Panc1 (cell line): ENCODE measurements at regions of chr5 and their contacts with region 1.

Region 1: DNA sequence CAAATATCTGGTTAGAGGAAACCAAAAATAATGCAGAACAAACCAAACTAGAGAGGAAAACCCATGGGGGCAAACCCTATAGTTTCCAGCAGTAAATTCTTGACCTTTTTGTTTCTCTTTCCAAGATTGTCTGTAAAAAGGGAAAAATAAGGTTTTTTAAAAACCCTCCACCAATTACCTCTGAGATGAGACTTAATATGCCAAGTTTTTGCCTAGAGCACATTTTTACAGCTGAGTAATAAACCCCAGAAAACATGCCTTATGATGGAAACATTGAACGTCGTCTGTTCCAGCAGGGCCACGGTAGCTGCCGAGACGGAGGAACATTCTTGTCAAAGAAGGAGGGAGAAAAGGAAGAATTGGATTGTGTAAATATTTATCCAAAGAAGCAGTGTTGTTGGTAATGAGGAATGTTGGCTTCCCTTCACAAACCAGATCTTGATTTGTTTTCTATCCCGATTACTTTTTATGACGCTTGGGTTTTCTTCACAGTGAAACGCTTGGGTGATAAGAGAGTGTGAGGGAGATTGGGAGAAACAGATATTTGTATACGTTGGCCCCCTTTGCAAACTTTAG is 17.3 kb upstream of the MSX2 start:
- DNase-seq: no peak
- ATAC-seq: no peak
- H3K4me3 ChIP-seq: no peak overlapping the region
- H3K27ac ChIP-seq: no peak overlapping the region
- H3K4me1 ChIP-seq: no peaks in the 10 kb centered on the region; the same call in 1 of the 2 replicates
- H3K27me3 ChIP-seq: no peaks in the 10 kb centered on the region
- CTCF ChIP-seq: no peak

Region 2: DNA sequence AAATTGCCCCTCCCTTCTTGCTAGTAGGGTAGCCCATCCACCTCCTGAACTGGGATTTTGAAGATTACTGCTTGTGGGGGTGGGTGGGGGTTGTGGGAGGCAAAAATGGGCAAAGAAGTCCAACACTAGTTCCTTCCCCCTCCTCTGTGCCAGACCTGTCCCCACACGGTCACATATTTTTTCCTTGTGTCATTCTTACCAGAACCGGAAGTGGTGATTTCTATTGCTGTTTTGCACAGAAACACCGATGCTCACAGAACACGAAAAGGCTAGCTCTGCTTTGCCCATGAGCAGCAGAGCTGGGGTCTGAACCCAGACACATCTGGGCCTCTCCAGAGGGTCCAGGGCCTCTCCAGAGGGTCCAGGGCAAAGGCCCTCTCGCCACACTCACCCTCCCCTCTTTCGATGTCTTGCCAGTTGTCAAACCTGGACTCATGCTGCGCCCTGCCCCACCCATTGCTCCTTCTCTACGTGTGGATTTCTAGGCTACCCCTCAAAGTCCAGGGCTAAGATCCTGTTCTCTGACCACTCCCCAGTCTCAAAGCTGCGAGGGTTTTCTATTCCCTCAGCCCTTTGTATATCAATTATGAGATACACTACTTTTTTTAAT is 247.1 kb before region 1 on chr5:
- CTCF ChIA-PET with region 1: no interaction called
- POLR2A ChIA-PET with region 1: interaction called, 12 read pairs
- in situ Hi-C with region 1: no loop called
- intact Hi-C with region 1: no loop called
- DNase-seq: no peak
- ATAC-seq: no peak
- H3K4me3 ChIP-seq: no peak overlapping the region
- H3K27ac ChIP-seq: no peak overlapping the region; the same call in 1 of the 2 replicates
- H3K4me1 ChIP-seq: no peaks in the 10 kb centered on the region
- H3K27me3 ChIP-seq: no peaks in the 10 kb centered on the region
- CTCF ChIP-seq: no peak

Region 3: DNA sequence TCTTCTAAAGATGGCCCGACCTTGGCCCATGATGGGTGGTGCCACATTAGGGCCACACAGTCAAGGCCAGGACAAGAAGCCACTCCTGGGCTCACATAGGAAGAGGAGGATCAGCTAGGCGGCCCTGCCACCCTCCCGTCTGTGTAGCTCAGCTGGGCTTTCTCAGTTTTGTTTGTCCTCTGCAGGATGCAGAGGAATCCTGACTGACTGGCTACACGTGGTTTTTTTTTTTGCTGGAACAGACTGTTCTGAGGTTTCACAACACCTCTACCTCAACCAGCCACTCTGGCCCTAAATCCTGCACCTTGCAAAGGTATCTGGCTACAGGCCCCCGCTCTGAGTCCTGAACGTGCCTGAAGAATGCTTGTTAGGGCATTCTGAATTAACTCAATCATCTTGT is 71.0 kb before region 1 on chr5:
- CTCF ChIA-PET with region 1: no interaction called
- POLR2A ChIA-PET with region 1: no interaction called
- in situ Hi-C with region 1: no loop called
- intact Hi-C with region 1: no loop called
- DNase-seq: no peak
- ATAC-seq: no peak
- H3K4me3 ChIP-seq: no peak overlapping the region
- H3K27ac ChIP-seq: no peak overlapping the region
- H3K4me1 ChIP-seq: no peaks in the 10 kb centered on the region
- H3K27me3 ChIP-seq: no peaks in the 10 kb centered on the region
- CTCF ChIP-seq: no peak

Region 4: DNA sequence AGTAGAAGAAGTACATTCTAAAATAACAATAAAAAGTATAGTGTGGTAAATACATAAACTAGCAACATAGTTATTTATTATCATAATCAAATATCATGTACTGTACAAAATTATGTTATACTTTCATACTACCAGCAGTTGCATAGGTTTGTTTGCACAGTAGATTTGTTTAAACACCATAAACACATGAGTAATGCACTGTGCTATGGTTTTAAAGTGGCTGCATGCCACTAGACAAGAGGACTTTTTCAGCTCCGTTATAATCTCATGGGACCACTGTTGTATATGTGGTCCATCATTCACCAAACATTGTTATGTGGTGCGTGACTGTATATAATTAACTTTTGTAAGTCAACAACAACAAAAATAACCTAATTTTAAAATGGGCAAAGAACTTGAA is 599.3 kb after region 1 on chr5:
- CTCF ChIA-PET with region 1: no interaction called
- POLR2A ChIA-PET with region 1: no interaction called
- in situ Hi-C with region 1: no loop called
- intact Hi-C with region 1: no loop called
- DNase-seq: peak; percentile 33
- ATAC-seq: peak; percentile 97
- H3K4me3 ChIP-seq: no peak overlapping the region
- H3K27ac ChIP-seq: 0 out of 2 replicates have a peak overlapping the region, but pooled peaks have one; percentile 12
- H3K4me1 ChIP-seq: peaks cover 6% of the 10 kb centered on the region; the same call in 1 of the 2 replicates
- H3K27me3 ChIP-seq: no peaks in the 10 kb centered on the region
- CTCF ChIP-seq: no peak